ENCODE measurements at regions of chr3 and their contacts with region 1.

Region 1: GRCh38 chr3:197256836-197257444 is 41.5 kb downstream of the DLG1 start:
- DNase-seq: peak; percentile 7
- H3K4me3 ChIP-seq: no peak overlapping the region
- CTCF ChIP-seq: peak; percentile 30

Region 2: GRCh38 chr3:197224034-197224444 is 32.9 kb before region 1 on chr3:
- CTCF ChIA-PET with region 1: interaction called, 18 read pairs
- POLR2A ChIA-PET with region 1: no interaction called
- DNase-seq: peak; percentile 17
- H3K4me3 ChIP-seq: no peak overlapping the region
- CTCF ChIP-seq: peak; percentile 34

Region 3: DNA sequence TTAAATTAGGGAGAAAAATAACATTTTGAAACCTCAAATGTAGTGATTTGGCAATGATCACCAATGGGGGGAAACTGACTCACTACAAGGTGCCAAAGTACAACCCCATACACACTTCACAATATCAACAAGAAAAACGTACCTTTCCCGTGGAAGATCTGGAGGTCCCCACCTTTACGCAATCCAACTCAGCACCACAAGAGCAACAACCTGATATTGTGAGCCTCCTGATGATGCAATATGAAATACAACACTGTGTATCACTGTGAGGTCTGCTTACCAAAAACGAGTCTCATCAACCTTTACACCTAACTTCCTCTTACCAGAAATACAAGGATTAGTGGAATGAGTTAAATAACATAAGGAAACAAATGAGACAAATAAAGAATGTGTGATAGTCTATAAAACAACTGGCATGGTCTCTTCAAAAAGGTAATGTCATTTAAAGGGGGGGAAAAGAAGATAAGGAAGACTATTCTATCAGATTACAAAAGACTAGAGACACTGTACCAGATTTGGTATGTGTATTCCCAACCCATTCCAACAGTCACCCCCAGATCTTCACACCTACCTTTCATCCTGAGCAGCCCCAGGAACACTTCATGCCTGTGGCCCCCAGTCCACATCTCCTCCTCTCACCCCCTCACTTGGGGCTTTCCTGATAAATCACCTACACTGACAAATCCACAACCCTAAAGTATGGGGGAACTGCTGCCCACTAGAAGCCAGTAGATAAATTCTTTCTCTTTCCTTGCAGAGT is 13.8 kb after region 1 on chr3:
- CTCF ChIA-PET with region 1: interaction called, 71 read pairs
- POLR2A ChIA-PET with region 1: no interaction called
- DNase-seq: no peak
- H3K4me3 ChIP-seq: no peak overlapping the region
- CTCF ChIP-seq: no peak

Region 4: GRCh38 chr3:197372047-197372666 is 115.2 kb after region 1 on chr3:
- CTCF ChIA-PET with region 1: interaction called, 17 read pairs
- POLR2A ChIA-PET with region 1: no interaction called
- DNase-seq: peak; percentile 79
- H3K4me3 ChIP-seq: no peak overlapping the region
- CTCF ChIP-seq: no peak

Region 5: GRCh38 chr3:197501879-197502620 is 245.1 kb after region 1 on chr3:
- CTCF ChIA-PET with region 1: interaction called, 36 read pairs
- POLR2A ChIA-PET with region 1: no interaction called
- DNase-seq: no peak
- H3K4me3 ChIP-seq: no peak overlapping the region
- CTCF ChIP-seq: peak; percentile 52

Region 6: GRCh38 chr3:197525706-197526105 is 268.8 kb after region 1 on chr3:
- CTCF ChIA-PET with region 1: interaction called, 15 read pairs
- POLR2A ChIA-PET with region 1: no interaction called
- DNase-seq: no peak
- H3K4me3 ChIP-seq: no peak overlapping the region
- CTCF ChIP-seq: peak; percentile 37

Measured in AG04449 (cell line).